ENCODE measurements at regions of chrX and their contacts with region 1.

Region 1: GRCh38 chrX:154748712-154749343 is 2.0 kb downstream of the GAB3 start:
- DNase-seq: no peak
- ATAC-seq: peak; percentile 85
- H3K4me3 ChIP-seq: no peak overlapping the region
- H3K27ac ChIP-seq: no peak overlapping the region
- H3K4me1 ChIP-seq: no peaks in the 10 kb centered on the region
- H3K27me3 ChIP-seq: no peaks in the 10 kb centered on the region
- CTCF ChIP-seq: peak; percentile 74 to 75 (median 75)
- EP300 ChIP-seq: no peak
- POLR2A ChIP-seq: no peak
- RAD21 ChIP-seq: peak; percentile 82

Region 2: DNA sequence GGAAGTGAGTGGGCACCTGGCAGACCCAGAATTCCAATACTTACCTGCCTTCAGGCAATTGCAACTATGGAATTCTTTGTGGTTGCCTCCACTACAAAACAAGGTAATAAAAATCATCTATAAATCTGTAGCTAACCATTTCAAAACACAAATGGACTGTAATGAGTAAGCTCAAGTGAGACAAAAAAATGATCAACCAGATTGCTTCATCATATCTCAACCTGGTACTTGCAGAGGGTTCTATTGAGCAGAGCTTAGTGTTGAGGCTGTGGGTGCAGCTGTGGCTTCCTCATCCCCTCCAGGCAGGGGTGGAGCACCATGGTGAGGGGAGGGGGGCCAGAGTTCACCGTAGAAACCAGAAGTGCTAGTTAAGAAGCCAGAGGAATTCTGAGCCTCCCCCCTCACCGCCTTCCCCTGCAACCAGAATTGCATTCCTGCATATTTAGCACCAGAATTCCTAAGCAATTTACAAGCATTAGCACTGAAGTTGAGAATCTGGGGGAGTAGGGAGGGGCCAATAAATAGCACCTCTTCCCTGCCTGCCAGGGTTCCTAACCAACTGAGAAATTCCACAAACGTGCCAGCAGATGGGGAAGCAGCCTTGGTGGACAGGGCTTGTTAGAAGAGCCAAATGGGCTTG is 152.4 kb before region 1 on chrX:
- CTCF ChIA-PET with region 1: interaction called, 3 read pairs
- POLR2A ChIA-PET with region 1: no interaction called
- RAD21 ChIA-PET with region 1: no interaction called
- SMC1A ChIA-PET with region 1: no interaction called
- in situ Hi-C with region 1: loop called (anchors 25 kb)
- intact Hi-C with region 1: no loop called
- DNase-seq: no peak
- ATAC-seq: no peak
- H3K4me3 ChIP-seq: no peak overlapping the region
- H3K27ac ChIP-seq: no peak overlapping the region
- H3K4me1 ChIP-seq: no peaks in the 10 kb centered on the region
- H3K27me3 ChIP-seq: no peaks in the 10 kb centered on the region
- CTCF ChIP-seq: no peak
- EP300 ChIP-seq: no peak
- POLR2A ChIP-seq: no peak
- RAD21 ChIP-seq: no peak

Region 3: DNA sequence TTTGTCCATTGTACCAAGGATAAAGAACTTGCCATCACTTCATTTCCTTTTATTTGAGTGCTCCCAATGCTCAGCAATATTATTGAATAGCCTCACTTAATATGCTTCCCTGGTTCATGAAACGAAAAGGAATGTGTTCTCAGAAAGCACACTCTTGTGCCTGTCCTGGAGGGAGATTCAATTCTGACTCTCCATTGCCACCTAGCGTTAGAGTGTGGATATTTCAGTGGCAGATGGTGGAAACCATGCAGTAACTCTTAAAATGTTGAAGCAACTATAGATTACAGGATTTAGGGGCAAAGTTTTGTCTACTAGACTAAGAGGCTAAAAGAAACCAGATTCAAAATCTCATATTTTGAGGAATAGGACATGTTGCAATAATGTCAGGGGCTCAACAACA is 33.9 kb before region 1 on chrX:
- CTCF ChIA-PET with region 1: interaction called, 13 read pairs
- POLR2A ChIA-PET with region 1: no interaction called
- RAD21 ChIA-PET with region 1: interaction called, 10 read pairs
- SMC1A ChIA-PET with region 1: interaction called, 7 read pairs
- in situ Hi-C with region 1: no loop called
- intact Hi-C with region 1: no loop called
- DNase-seq: no peak
- ATAC-seq: peak; percentile 78
- H3K4me3 ChIP-seq: no peak overlapping the region
- H3K27ac ChIP-seq: no peak overlapping the region
- H3K4me1 ChIP-seq: peaks cover 37% of the 10 kb centered on the region
- H3K27me3 ChIP-seq: no peaks in the 10 kb centered on the region
- CTCF ChIP-seq: peak; percentile 78 to 93 (median 79)
- EP300 ChIP-seq: no peak
- POLR2A ChIP-seq: no peak
- RAD21 ChIP-seq: peak; percentile 86

Region 4: DNA sequence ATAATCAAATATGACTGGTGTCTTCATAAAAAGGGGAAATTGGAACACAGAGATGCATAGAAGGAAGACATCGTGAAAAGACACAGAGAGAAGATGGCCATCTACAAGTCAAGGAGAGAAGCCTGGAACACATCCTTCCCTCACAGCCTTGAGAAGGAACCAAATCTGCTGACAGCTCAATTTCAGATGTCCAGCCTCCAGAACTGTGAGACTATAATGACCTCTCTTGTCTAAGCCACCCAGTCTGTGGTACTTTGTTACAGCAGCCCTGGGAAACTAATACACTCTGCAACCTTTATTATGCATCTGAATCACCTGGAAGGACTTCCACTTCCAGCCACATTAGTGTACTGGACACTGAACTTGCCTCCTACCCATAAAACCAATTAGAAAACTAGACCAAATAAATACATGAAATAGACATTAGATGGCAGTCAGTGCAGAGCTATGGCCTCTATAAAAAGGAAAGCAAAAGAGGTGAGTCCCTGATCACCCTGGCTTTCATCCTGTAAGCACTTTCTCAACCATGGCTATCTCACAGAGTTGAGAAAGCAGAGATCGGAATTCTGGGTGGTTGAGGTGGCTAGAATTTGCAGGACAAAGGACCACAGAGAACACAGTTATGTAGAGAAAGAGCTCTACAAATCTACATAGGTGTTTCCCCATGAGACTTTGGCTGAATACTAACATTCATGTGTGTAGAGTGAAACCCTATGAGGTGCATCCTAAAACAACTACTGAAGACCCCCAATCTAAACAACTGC is 23.7 kb before region 1 on chrX:
- CTCF ChIA-PET with region 1: interaction called, 5 read pairs
- POLR2A ChIA-PET with region 1: no interaction called
- RAD21 ChIA-PET with region 1: interaction called, 10 read pairs
- SMC1A ChIA-PET with region 1: interaction called, 7 read pairs
- in situ Hi-C with region 1: no loop called
- intact Hi-C with region 1: loop called (anchors 1 kb)
- DNase-seq: no peak
- ATAC-seq: peak; percentile 60
- H3K4me3 ChIP-seq: no peak overlapping the region
- H3K27ac ChIP-seq: no peak overlapping the region
- H3K4me1 ChIP-seq: peaks cover 8% of the 10 kb centered on the region
- H3K27me3 ChIP-seq: no peaks in the 10 kb centered on the region
- CTCF ChIP-seq: peak in 1 of 3 experiments; percentile 12; a peak in 1 of 6 replicates
- EP300 ChIP-seq: no peak
- POLR2A ChIP-seq: no peak
- RAD21 ChIP-seq: peak; percentile 36

Region 5: DNA sequence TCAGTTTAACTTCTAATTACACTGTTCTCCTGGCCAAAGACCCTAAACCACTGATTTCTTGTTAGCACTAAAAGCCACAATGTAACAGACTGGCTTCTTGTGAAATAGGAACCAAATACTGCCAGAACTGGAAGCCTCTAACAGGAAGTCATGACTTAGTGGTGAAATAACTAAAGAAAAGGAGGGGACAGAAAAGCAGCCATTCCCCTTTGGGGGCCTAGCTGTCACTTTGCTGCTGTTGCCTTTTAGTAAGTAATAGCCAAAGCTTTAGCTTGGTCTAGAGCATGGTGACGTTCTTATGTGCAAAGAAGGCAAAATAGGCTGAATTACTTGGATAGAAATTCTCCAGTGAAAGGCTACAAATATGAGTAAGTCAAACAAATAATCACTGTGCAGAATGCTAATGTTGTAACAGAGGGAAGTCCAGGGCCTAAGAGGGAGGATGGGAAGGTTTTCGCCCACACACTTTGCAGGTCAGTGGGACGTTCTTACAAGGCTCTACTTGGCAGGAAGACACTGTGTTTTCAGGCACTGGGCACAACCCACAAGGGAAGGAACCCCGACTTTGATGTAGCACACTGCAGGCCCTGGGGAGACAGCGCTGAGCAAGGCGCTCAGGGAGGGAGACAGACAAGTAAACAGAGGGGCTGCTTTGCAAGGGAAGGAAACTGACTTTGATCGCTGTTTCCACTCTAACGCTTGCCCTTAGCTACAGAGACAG is 14.6 kb before region 1 on chrX:
- CTCF ChIA-PET with region 1: interaction called, 19 read pairs
- POLR2A ChIA-PET with region 1: no interaction called
- RAD21 ChIA-PET with region 1: interaction called, 4 read pairs
- SMC1A ChIA-PET with region 1: interaction called, 6 read pairs
- in situ Hi-C with region 1: no loop called
- intact Hi-C with region 1: no loop called
- DNase-seq: no peak
- ATAC-seq: peak; percentile 31; the same call in 2 of the 3 replicates
- H3K4me3 ChIP-seq: peak overlapping the region; percentile 29; the same call in 1 of the 2 replicates
- H3K27ac ChIP-seq: peak overlapping the region; percentile 45
- H3K4me1 ChIP-seq: peaks cover 8% of the 10 kb centered on the region
- H3K27me3 ChIP-seq: no peaks in the 10 kb centered on the region
- CTCF ChIP-seq: no peak
- EP300 ChIP-seq: no peak
- POLR2A ChIP-seq: no peak
- RAD21 ChIP-seq: no peak

Region 6: GRCh38 chrX:154762523-154763289 is 13.9 kb after region 1 on chrX and contains the start of gene DKC1:
- CTCF ChIA-PET with region 1: interaction called, 24 read pairs
- POLR2A ChIA-PET with region 1: no interaction called
- RAD21 ChIA-PET with region 1: interaction called, 16 read pairs
- SMC1A ChIA-PET with region 1: interaction called, 6 read pairs
- in situ Hi-C with region 1: no loop called
- intact Hi-C with region 1: no loop called
- DNase-seq: peak; percentile 82
- ATAC-seq: peak; percentile 91
- H3K4me3 ChIP-seq: peak within 1 kb of the TSS; percentile 73
- H3K27ac ChIP-seq: peak within 1 kb of the TSS; percentile 76
- H3K4me1 ChIP-seq: no peaks in the 10 kb centered on the region
- H3K27me3 ChIP-seq: no peaks in the 10 kb centered on the region
- CTCF ChIP-seq: peak in 2 of 3 experiments; percentile 5 to 7; a peak in 1 of 6 replicates
- EP300 ChIP-seq: no peak
- POLR2A ChIP-seq: peak; percentile 90
- RAD21 ChIP-seq: no peak
- polyA plus RNA-seq, gene DKC1: 106 to 159 TPM

Region 7: DNA sequence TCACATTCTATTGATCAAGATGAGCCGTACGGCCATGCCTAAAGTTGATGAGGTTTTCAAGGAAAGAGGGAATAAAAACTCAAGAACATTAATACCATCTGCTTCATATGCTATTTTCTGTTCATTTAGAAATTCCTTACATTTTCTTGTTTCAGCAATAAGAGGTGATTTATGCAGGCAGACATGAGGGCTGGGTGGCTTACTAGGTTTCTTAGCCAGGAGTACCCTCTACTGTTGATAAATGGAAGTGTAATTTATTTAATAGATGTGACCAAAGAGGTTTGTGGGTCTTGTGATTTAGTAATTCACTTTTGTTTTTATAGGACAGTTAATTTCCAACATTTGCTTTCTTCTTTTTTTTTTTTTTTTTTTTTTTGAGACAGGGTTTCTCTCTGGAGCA is 92.0 kb after region 1 on chrX:
- CTCF ChIA-PET with region 1: interaction called, 28 read pairs
- POLR2A ChIA-PET with region 1: no interaction called
- RAD21 ChIA-PET with region 1: interaction called, 3 read pairs
- SMC1A ChIA-PET with region 1: interaction called, 5 read pairs
- in situ Hi-C with region 1: no loop called
- intact Hi-C with region 1: loop called (anchors 2 kb)
- DNase-seq: no peak
- ATAC-seq: peak; percentile 76
- H3K4me3 ChIP-seq: no peak overlapping the region
- H3K27ac ChIP-seq: no peak overlapping the region
- H3K4me1 ChIP-seq: no peaks in the 10 kb centered on the region
- H3K27me3 ChIP-seq: no peaks in the 10 kb centered on the region
- CTCF ChIP-seq: peak; percentile 19 to 64 (median 42); a peak in 3 of 6 replicates
- EP300 ChIP-seq: no peak
- POLR2A ChIP-seq: no peak
- RAD21 ChIP-seq: peak; percentile 85

Measured in GM12878 (cell line).